Naive thymus-derived CD4-positive, alpha-beta T cell (primary cell): ENCODE measurements at regions of chr12 and their contacts with region 1.

Region 1: DNA sequence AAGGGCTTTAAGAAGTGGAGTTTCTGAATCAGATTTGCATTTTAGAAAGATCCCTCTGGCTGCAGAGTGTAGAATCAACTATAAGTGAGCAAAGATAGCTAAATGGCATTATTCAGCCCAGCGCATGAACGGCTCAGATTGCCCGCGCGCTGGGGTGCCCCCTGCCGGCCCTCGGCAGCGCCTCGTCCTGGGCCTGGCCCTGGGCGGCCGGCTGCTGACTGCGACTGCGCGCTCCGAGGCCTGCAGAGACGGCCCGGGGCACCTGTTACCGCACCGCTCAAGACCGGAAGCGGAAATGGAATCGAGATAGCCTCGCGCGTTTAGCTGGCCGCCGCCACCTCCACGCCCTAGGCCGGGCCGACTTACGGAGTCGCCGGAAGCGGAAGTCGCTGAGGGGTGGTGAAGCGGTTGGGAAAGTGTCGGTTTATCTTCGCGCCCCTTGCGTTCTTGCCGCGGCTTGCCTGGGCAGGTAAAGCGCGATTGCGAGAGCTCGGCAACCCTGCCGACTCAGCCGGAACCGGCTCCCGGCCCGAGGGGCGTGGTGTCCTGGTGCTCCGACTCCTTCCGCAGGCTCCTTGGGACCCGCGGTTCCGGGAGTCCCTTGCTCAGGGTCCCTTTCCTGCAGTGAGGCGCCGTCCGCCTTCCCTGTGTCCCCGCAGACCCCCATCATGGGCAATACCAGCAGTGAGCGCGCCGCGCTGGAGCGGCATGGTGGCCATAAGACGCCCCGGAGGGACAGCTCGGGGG is at the start of gene PRKAB1:
- DNase-seq: peak; percentile 91 to 96 (median 93)
- ATAC-seq: peak; percentile 96
- H3K4me3 ChIP-seq: peak within 1 kb of the TSS; percentile 81
- H3K4me3 Mint-ChIP-seq: peak within 1 kb of the TSS; percentile 85 to 98 (median 88)
- H3K27ac ChIP-seq: peak within 1 kb of the TSS; percentile 76
- H3K27ac Mint-ChIP-seq: peak within 1 kb of the TSS; percentile 77 to 96 (median 92)
- H3K4me1 ChIP-seq: peaks cover 20 to 30% of the 10 kb centered on the region in 2 donors
- H3K4me1 Mint-ChIP-seq: peaks cover 27 to 63% (median 55%) of the 10 kb centered on the region in 7 donors
- H3K27me3 ChIP-seq: no peaks in the 10 kb centered on the region
- H3K27me3 Mint-ChIP-seq: no peaks in the 10 kb centered on the region
- total RNA-seq, gene PRKAB1: 23.5 to 48.7 (median 43.3) TPM

Region 2: DNA sequence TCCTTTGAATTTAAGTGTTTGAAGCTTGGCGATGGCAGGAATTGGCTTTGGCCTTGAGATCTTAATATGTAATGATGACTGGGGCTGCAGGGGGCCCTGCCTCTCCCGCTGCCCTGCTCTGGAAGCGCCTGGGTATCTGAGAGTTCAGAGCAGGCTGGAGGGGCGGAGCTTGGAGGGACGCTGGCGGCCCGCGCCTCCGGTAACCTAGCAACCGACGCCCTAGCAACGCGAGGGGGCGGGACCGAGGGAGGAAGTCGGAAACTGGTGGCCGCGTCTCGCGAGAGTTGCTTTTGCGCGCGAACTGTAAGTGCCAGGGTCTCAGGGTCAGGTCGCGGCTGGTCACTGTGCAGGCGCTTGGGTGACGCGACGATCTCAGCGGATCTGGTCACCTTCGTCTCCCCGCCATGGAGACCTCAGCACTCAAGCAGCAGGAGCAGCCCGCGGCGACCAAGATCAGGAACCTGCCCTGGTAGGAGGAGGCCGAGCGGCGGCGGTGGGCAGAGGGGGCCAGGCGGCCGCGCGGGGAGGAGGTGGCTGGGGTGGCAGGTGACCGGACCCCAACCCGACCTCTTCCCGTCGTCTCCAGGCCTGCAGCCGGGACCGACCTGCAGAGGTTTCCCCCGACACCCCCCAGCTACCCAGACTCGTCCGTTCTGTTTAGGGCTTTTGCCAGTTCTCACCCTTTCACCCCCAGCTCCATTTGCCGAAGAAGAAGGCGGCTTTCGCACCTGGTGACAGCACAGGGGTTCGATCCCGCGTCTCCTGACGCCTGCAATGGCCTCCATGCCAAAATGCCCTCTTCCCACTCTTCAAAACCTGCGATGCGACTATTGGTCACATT is 1651.1 kb before region 1 on chr12 and contains the start of gene RFC5:
- CTCF ChIA-PET with region 1: no interaction called
- POLR2A ChIA-PET with region 1: no interaction called
- intact Hi-C with region 1: loop called in 1 of 2 experiments (anchors 1 kb)
- DNase-seq: peak; percentile 93 to 98 (median 97)
- ATAC-seq: peak; percentile 99
- H3K4me3 ChIP-seq: peak within 1 kb of the TSS; percentile 80
- H3K4me3 Mint-ChIP-seq: peak within 1 kb of the TSS; percentile 89 to 95 (median 92)
- H3K27ac ChIP-seq: peak within 1 kb of the TSS; percentile 69
- H3K27ac Mint-ChIP-seq: peak within 1 kb of the TSS; percentile 82 to 95 (median 92)
- H3K4me1 ChIP-seq: peaks cover 10 to 13% of the 10 kb centered on the region in 2 donors
- H3K4me1 Mint-ChIP-seq: peaks cover 11 to 29% (median 18%) of the 10 kb centered on the region in 7 donors
- H3K27me3 ChIP-seq: no peaks in the 10 kb centered on the region
- H3K27me3 Mint-ChIP-seq: peaks cover 0 to 7% (median 0%) of the 10 kb centered on the region in 5 donors
- total RNA-seq, gene RFC5: 6.3 to 40.3 (median 15.6) TPM

Region 3: DNA sequence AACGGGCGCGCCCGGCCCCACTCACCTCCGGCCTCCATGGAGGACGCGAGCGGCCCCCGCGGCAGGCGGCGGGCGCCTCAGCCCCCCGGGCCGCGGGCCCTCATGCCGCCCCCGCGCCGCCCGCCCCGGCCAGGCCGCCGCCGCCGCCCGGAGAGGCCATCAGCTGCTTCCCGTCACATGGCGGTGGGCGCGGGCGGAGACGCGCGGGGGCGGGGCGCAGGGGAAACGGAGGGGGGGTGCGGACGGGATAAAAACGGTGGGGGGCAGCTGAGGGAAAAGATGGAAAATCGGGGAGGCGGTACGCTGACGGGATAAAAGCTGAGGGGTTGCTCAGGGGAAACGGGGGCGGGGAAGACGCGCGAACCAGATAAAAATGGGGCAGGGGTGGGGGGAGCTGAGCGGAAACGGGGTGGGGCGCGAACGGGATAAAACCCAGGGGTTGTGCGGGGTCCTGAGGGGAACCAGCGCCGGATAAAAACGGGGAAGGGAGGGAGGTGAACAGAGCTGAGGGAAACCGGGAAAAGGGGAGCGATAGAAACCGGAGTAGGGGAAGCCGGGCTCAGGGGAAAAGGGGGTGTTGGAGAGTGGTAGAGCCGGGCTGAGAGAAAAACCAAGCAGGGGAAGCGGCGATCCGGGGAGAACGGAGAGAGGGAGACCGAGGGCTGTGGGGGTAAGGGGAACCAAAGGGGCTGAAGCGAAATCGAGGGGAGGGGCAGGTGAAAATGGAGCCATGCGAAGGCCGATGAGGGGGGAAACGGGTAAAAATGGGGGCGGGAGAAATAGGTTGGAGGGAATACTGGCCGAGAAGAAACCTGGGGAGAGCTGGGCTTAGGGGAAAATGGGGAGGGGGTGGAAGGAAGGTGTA is 1606.5 kb before region 1 on chr12 and contains the start of gene WSB2:
- CTCF ChIA-PET with region 1: no interaction called
- POLR2A ChIA-PET with region 1: no interaction called
- intact Hi-C with region 1: loop called (anchors 2 to 10 kb)
- DNase-seq: peak; percentile 24 to 81 (median 39)
- ATAC-seq: peak; percentile 53
- H3K4me3 ChIP-seq: peak within 1 kb of the TSS; percentile 88
- H3K4me3 Mint-ChIP-seq: peak within 1 kb of the TSS; percentile 88 to 100 (median 96)
- H3K27ac ChIP-seq: peak within 1 kb of the TSS; percentile 80
- H3K27ac Mint-ChIP-seq: peak within 1 kb of the TSS; percentile 92 to 98 (median 94)
- H3K4me1 ChIP-seq: peaks cover 13 to 32% of the 10 kb centered on the region in 2 donors
- H3K4me1 Mint-ChIP-seq: peaks cover 44 to 65% (median 57%) of the 10 kb centered on the region in 7 donors
- H3K27me3 ChIP-seq: no peaks in the 10 kb centered on the region
- H3K27me3 Mint-ChIP-seq: no peaks in the 10 kb centered on the region
- total RNA-seq, gene WSB2: 12.2 to 52.2 (median 19.1) TPM

Region 4: GRCh38 chr12:118404876-118405521 is 1262.8 kb before region 1 on chr12:
- CTCF ChIA-PET with region 1: no interaction called
- POLR2A ChIA-PET with region 1: no interaction called
- intact Hi-C with region 1: loop called in 1 of 2 experiments (anchors 1 kb)
- DNase-seq: peak in 7 of 9 donors; percentile 18 to 42 (median 33)
- ATAC-seq: peak; percentile 72
- H3K4me3 ChIP-seq: no peak overlapping the region
- H3K4me3 Mint-ChIP-seq: no peak overlapping the region
- H3K27ac ChIP-seq: no peak overlapping the region
- H3K27ac Mint-ChIP-seq: no peak overlapping the region
- H3K4me1 ChIP-seq: no peaks in the 10 kb centered on the region
- H3K4me1 Mint-ChIP-seq: peaks cover 0 to 3% (median 0%) of the 10 kb centered on the region in 7 donors
- H3K27me3 ChIP-seq: no peaks in the 10 kb centered on the region
- H3K27me3 Mint-ChIP-seq: no peaks in the 10 kb centered on the region

Region 5: GRCh38 chr12:119319638-119320037 is 348.1 kb before region 1 on chr12:
- CTCF ChIA-PET with region 1: no interaction called
- POLR2A ChIA-PET with region 1: no interaction called
- intact Hi-C with region 1: no loop called
- DNase-seq: no peak
- ATAC-seq: no peak
- H3K4me3 ChIP-seq: no peak overlapping the region
- H3K4me3 Mint-ChIP-seq: no peak overlapping the region
- H3K27ac ChIP-seq: no peak overlapping the region
- H3K27ac Mint-ChIP-seq: no peak overlapping the region
- H3K4me1 ChIP-seq: no peaks in the 10 kb centered on the region
- H3K4me1 Mint-ChIP-seq: no peaks in the 10 kb centered on the region
- H3K27me3 ChIP-seq: no peaks in the 10 kb centered on the region
- H3K27me3 Mint-ChIP-seq: peaks cover 0 to 25% (median 16%) of the 10 kb centered on the region in 5 donors

Region 6: DNA sequence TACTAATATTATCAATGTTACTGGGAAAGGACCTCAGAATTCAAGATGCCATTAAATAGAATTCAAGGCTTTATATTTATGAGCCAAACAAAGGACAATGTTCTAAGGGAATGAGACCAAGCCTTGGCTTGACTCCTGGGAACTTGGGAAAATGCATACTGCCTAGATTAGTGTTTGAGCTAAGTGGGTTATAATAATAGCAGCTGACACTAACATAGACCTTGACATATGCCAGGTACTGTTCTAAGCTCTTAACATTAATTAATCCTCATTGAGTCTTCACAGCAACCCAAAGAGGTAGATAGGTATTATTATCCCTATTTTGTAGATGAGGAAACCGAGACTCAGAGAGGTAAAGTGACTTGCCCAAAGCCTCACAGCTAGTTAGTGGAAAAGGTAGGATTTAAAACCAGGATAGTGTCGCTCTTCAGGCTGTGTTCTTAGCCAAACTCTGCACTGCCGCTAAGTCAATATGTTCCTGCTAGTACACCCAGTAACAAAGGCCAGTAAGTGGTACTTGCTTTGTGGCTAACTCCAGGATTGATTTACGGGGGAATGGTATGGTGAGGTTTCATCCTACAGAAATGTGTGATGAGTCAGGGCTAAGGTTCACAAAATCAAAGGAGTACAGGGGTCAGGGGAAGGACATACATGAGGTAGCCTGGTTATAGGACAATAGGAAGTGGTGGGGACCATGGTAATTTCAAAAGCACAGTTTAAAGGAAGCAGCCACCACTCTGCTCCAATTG is 35.6 kb before region 1 on chr12:
- CTCF ChIA-PET with region 1: no interaction called
- POLR2A ChIA-PET with region 1: no interaction called
- intact Hi-C with region 1: no loop called
- DNase-seq: no peak
- ATAC-seq: no peak
- H3K4me3 ChIP-seq: no peak overlapping the region
- H3K4me3 Mint-ChIP-seq: no peak overlapping the region
- H3K27ac ChIP-seq: no peak overlapping the region
- H3K27ac Mint-ChIP-seq: no peak overlapping the region
- H3K4me1 ChIP-seq: no peaks in the 10 kb centered on the region
- H3K4me1 Mint-ChIP-seq: peaks cover 0 to 2% (median 0%) of the 10 kb centered on the region in 7 donors
- H3K27me3 ChIP-seq: no peaks in the 10 kb centered on the region
- H3K27me3 Mint-ChIP-seq: peaks cover 29 to 48% (median 44%) of the 10 kb centered on the region in 5 donors

Region 7: DNA sequence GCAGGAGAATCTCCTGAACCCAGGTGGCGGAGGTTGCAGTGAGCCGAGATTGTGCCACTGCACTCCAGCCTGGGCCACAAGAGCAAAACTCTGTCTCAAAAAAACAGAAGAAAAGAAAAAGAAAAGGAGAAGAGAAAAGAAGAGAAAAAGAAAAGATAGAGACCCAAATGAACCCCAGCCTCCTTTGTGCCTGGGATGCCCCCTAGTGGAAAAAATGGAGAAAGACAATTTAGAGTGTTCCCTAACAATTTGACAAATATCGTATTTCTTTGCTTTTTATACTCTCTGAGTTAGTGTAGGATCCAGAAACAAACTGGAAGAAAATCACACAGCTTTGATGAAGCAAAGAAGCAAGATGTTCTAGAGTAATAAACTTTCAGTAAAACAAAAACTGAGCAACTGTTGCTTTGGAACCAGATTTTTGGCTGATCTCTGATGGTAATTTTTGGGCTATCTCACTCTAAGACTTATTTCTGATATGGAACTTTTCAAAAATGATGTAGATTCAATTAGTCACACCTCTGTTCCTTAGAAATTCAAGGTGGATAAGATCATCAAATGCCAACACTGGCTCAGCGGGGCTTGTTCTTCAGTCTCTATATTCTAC is 18.4 kb before region 1 on chr12:
- CTCF ChIA-PET with region 1: interaction called, 5 read pairs
- POLR2A ChIA-PET with region 1: interaction called, 3 read pairs
- intact Hi-C with region 1: loop called in 1 of 2 experiments (anchors 1 kb)
- DNase-seq: no peak
- ATAC-seq: no peak
- H3K4me3 ChIP-seq: no peak overlapping the region
- H3K4me3 Mint-ChIP-seq: no peak overlapping the region
- H3K27ac ChIP-seq: no peak overlapping the region
- H3K27ac Mint-ChIP-seq: no peak overlapping the region
- H3K4me1 ChIP-seq: no peaks in the 10 kb centered on the region
- H3K4me1 Mint-ChIP-seq: peaks cover 0 to 3% (median 0%) of the 10 kb centered on the region in 7 donors
- H3K27me3 ChIP-seq: no peaks in the 10 kb centered on the region
- H3K27me3 Mint-ChIP-seq: peaks cover 5 to 12% (median 9%) of the 10 kb centered on the region in 5 donors

Region 8: GRCh38 chr12:119876761-119877638 is 209.2 kb after region 1 on chr12 and contains the start of gene CIT:
- CTCF ChIA-PET with region 1: no interaction called
- POLR2A ChIA-PET with region 1: no interaction called
- intact Hi-C with region 1: loop called (anchors 1 kb)
- DNase-seq: peak; percentile 71 to 86 (median 81)
- ATAC-seq: peak; percentile 100
- H3K4me3 ChIP-seq: peak within 1 kb of the TSS; percentile 86
- H3K4me3 Mint-ChIP-seq: peak within 1 kb of the TSS; percentile 78 to 97 (median 88)
- H3K27ac ChIP-seq: peak within 1 kb of the TSS; percentile 58
- H3K27ac Mint-ChIP-seq: peak within 1 kb of the TSS in 8 of 9 donors; percentile 5 to 83 (median 37)
- H3K4me1 ChIP-seq: no peaks in the 10 kb centered on the region
- H3K4me1 Mint-ChIP-seq: peaks cover 10 to 27% (median 15%) of the 10 kb centered on the region in 7 donors
- H3K27me3 ChIP-seq: no peaks in the 10 kb centered on the region
- H3K27me3 Mint-ChIP-seq: peaks cover 0 to 14% (median under 1%) of the 10 kb centered on the region in 5 donors
- total RNA-seq, gene CIT: 1.6 to 69.9 (median 3.6) TPM

Region 9: GRCh38 chr12:120116792-120117651 is 449.3 kb after region 1 on chr12:
- CTCF ChIA-PET with region 1: no interaction called
- POLR2A ChIA-PET with region 1: no interaction called
- intact Hi-C with region 1: loop called (anchors 2 to 5 kb)
- DNase-seq: peak; percentile 95 to 100 (median 98)
- ATAC-seq: peak; percentile 91
- H3K4me3 ChIP-seq: peak overlapping the region; percentile 82
- H3K4me3 Mint-ChIP-seq: peak overlapping the region; percentile 78 to 95 (median 90)
- H3K27ac ChIP-seq: peak overlapping the region; percentile 84
- H3K27ac Mint-ChIP-seq: peak overlapping the region; percentile 80 to 97 (median 90)
- H3K4me1 ChIP-seq: peaks cover 46 to 48% of the 10 kb centered on the region in 2 donors
- H3K4me1 Mint-ChIP-seq: peaks cover 64 to 86% (median 80%) of the 10 kb centered on the region in 7 donors
- H3K27me3 ChIP-seq: no peaks in the 10 kb centered on the region
- H3K27me3 Mint-ChIP-seq: no peaks in the 10 kb centered on the region